ENCODE measurements at regions of chr1 and their contacts with region 1.

Region 1: DNA sequence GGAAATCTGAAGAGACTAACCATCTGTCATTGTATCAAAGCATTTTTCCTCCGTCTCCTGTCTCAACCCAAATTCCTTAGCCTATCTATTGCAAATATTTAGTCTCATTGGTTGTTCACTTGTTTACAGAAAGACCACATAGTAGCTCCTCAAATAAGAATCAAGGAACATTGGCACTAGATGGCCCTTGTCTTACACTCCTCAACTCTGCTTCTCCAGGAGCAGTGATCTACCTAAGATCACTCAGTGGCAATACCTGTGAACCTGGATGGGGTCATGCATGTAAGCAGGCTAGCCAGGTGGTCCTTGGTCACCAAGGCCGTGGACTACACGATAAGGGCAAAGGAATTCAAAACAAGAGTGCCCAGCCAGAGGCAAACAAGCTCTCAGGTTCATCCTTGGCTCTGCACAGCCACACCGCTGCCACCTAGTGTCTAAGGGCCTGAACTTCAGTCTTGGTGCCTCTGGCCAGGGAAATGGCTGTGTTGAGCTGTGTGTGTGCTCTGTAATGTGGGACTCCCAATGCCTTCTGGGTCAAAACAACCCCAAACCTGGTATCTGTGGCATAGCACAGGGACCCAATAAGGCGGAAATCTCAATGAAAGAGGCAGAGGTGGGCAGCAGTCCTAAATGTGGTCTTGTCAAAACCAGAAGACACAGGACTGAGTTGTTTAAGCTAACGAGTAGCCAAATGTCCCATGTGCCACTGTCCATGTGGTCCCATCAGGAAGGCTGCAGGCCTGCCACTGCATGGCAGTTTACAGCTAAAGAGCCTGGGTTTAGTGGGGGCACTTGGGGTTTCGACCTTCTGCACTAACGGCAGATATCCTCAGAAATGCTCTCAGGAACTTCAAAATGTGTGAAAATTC is 54.5 kb downstream of the GPR161 start:
- DNase-seq: peak; percentile 84
- ATAC-seq: peak; percentile 92
- H3K4me3 Mint-ChIP-seq: no peak overlapping the region
- H3K27ac Mint-ChIP-seq: no peak overlapping the region
- H3K4me1 Mint-ChIP-seq: peaks cover 3% of the 10 kb centered on the region; the same call in 1 of the 2 replicates
- H3K27me3 Mint-ChIP-seq: no peaks in the 10 kb centered on the region
- CTCF ChIP-seq: peak; percentile 79

Region 2: DNA sequence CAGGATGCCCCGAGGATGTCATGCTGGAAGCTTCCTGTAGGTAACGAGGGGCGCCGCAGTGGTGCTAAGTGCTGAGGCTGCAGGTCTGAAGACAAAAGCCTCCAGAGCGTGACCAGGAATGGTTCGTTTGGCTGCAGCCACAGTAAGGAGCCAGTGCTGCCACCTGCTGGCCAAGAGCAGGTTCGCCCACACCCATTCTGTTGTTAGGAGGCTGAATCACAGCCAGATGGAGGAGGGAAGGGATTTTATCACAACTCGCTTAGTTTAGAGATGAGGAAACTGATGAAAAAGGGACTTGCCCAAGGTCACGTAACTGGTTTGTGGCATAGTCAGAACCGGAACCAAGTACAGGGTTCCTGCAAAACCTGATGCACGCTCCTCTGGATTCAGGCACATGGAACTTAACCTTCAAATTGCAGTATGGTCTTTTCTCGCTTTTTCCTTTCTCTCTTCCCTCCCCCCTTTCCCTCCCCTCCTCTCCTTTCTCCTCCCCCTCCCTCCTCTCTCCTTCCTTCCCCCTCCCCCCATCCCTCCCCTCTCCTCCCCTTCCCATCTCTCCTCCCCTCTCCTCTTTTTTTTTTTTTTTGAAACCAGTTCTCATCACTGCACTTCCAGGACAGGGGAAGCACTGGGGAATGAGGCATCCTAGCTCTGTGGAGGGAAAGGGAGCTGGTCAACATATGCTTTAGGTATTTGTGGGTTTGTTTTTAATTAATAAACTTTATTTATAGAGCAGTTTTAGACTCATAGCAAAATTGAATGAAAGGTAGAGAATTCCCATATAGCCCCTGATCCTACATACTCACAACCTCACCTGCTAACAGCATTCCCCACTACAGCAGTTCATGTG is 278.7 kb before region 1 on chr1:
- CTCF ChIA-PET with region 1: interaction called, 15 read pairs
- POLR2A ChIA-PET with region 1: no interaction called
- DNase-seq: peak; percentile 95
- ATAC-seq: peak; percentile 96
- H3K4me3 Mint-ChIP-seq: peak overlapping the region; percentile 54
- H3K27ac Mint-ChIP-seq: no peak overlapping the region; the same call in 1 of the 2 replicates
- H3K4me1 Mint-ChIP-seq: peaks cover 10% of the 10 kb centered on the region
- H3K27me3 Mint-ChIP-seq: no peaks in the 10 kb centered on the region; the same call in 1 of the 2 replicates
- CTCF ChIP-seq: peak; percentile 93

Region 3: DNA sequence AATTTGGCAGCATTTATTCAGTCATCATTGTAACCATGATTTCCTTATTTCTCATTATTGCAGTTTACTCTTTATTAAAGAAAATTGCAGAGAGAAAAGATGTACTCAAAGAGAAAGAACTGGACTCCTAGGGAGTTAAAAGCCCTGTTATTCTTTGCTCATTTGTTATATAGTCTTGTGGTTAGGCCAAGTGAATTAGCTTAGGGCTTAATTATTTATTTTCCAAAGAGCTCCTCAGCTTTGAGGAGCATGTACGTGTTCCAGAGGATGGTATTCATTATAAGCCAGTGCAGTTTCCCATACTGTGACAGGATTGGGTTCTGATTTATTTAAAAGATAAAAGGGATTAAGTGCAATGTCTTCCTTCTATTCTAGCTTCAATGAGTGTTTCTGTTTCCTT is 31.9 kb before region 1 on chr1:
- CTCF ChIA-PET with region 1: interaction called, 14 read pairs
- POLR2A ChIA-PET with region 1: interaction called, 6 read pairs
- DNase-seq: no peak
- ATAC-seq: no peak
- H3K4me3 Mint-ChIP-seq: no peak overlapping the region
- H3K27ac Mint-ChIP-seq: no peak overlapping the region
- H3K4me1 Mint-ChIP-seq: no peaks in the 10 kb centered on the region
- H3K27me3 Mint-ChIP-seq: no peaks in the 10 kb centered on the region
- CTCF ChIP-seq: no peak

Region 4: GRCh38 chr1:168106274-168106673 is 24.0 kb after region 1 on chr1:
- CTCF ChIA-PET with region 1: interaction called, 15 read pairs
- POLR2A ChIA-PET with region 1: no interaction called
- DNase-seq: no peak
- ATAC-seq: no peak
- H3K4me3 Mint-ChIP-seq: no peak overlapping the region
- H3K27ac Mint-ChIP-seq: no peak overlapping the region
- H3K4me1 Mint-ChIP-seq: peaks cover 21% of the 10 kb centered on the region
- H3K27me3 Mint-ChIP-seq: no peaks in the 10 kb centered on the region
- CTCF ChIP-seq: no peak

Region 5: DNA sequence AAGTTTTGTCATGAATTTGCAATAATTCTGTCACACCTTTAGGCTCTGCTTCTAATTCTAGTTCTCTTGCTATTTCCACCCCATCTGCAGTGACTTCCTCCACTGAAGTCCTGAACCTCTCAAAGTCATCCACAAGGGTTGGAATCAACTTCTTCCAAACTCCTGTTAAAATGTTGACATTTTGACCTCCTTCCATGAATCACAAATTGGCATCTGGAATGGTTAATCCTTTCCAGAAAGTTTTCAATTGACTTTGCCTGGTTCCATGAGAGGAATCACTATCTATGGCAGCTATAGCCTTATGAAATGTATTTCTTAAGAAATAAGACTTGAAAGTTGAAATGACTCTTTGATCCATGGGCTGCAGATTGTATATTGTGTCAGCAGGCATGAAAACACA is 123.9 kb after region 1 on chr1:
- CTCF ChIA-PET with region 1: no interaction called
- POLR2A ChIA-PET with region 1: no interaction called
- DNase-seq: no peak
- ATAC-seq: no peak
- H3K4me3 Mint-ChIP-seq: no peak overlapping the region
- H3K27ac Mint-ChIP-seq: no peak overlapping the region
- H3K4me1 Mint-ChIP-seq: peaks cover 5% of the 10 kb centered on the region; the same call in 1 of the 2 replicates
- H3K27me3 Mint-ChIP-seq: no peaks in the 10 kb centered on the region
- CTCF ChIP-seq: no peak

Region 6: DNA sequence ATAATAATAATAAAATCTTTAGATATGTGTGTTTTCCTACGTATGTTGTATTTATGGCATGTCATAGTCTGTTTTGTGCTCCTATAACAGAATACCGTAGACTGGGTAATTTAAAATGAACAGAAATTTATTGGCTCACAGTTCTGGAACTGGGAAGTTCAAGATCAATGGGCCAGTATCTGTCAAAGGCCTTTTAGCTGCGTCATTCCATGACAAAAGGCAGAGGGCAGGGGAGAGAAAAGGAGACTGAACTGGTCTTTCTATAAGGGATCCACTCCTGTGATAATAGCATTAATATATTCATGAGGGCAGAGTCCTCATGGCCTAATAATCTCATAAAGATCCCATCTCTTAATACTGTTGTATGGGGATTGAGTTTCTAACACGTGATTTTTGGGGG is 136.4 kb after region 1 on chr1:
- CTCF ChIA-PET with region 1: interaction called, 11 read pairs
- POLR2A ChIA-PET with region 1: no interaction called
- DNase-seq: no peak
- ATAC-seq: 0 out of 2 replicates have a peak, but pooled peaks have one; percentile 22
- H3K4me3 Mint-ChIP-seq: no peak overlapping the region
- H3K27ac Mint-ChIP-seq: no peak overlapping the region
- H3K4me1 Mint-ChIP-seq: peaks cover 24% of the 10 kb centered on the region
- H3K27me3 Mint-ChIP-seq: no peaks in the 10 kb centered on the region; the same call in 1 of the 2 replicates
- CTCF ChIP-seq: no peak